ENCODE measurements at regions of chr20 and their contacts with region 1.

Region 1: DNA sequence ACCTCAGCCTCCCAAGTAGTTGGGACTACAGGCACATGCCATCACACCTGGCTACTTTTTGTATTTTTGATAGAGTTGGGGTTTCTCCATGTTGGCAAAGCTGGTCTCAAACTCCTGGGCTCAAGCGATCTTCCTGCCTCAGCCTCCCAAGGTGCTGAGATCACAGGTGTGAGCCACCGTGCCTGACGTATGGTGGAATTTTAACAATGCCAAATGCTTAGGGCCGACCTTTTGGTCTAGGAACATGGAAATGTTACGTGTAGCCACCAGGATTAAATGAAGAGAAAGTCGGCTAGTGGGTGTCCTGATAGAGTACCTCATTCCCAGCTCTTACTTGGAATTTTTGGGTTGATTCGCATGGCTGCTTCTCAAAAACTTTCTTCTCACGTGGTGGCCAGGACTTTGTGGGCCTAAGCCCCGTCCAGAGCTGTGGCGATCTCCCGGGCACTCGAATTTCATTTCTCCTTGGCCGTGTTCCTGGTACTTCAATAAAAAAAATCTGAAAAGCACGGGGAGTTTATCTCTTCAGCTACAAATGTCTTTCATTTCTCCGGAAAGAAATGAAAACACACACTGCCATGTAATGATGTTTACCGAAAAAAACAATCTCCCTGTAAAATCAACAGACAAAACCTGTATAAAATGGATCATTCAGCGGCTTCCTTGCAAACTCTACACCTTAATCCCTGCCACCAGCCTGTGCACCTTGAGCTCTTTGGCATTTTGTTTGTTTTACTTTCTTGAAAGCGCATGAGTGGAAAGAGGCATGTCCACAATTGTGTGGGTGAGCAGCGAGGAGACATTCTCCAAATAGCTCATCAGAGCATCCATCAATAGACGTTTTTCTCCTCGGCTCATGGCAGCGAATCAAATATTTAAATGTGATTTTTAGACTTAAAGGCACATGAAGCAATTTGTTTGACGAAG is 172.9 kb downstream of the TFAP2C start:
- DNase-seq: no peak
- H3K4me3 ChIP-seq: no peak overlapping the region
- H3K27ac ChIP-seq: no peak overlapping the region
- H3K4me1 ChIP-seq: peaks cover 27% of the 10 kb centered on the region
- H3K27me3 ChIP-seq: no peaks in the 10 kb centered on the region
- CTCF ChIP-seq: no peak

Region 2: DNA sequence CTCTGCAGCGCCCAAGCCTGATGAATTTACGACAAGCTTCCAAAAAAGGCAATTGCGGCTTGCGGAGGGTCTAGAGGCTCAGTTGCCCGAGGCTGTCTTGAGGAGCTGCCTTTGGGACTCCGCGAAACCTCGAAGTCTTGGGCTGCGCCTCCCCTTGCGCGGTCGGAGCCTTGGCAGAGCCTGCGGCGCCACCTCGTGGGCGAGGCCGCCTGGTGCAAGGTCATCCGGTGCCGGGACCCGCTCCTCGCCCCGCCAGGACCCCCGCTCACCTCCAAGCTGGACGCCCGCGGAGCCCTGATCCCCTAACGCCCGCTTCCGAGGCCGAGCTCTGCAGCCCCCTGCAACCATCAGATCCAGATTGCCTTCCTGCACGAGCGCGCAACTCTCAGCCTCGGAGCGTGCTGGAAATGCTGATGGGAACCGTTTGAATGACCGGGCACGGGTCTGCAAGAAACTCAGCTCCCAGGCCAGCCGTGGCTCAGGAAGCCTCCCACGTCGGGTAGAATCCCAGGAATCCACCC is 458.1 kb before region 1 on chr20:
- CTCF ChIA-PET with region 1: no interaction called
- POLR2A ChIA-PET with region 1: no interaction called
- intact Hi-C with region 1: no loop called
- DNase-seq: peak in 1 of 2 experiments; percentile 17
- H3K4me3 ChIP-seq: no peak overlapping the region
- H3K27ac ChIP-seq: no peak overlapping the region
- H3K4me1 ChIP-seq: no peaks in the 10 kb centered on the region
- H3K27me3 ChIP-seq: peaks cover 81% of the 10 kb centered on the region
- CTCF ChIP-seq: peak; percentile 48

Region 3: GRCh38 chr20:56689288-56689687 is 112.7 kb before region 1 on chr20:
- CTCF ChIA-PET with region 1: no interaction called
- POLR2A ChIA-PET with region 1: no interaction called
- intact Hi-C with region 1: loop called (anchors 1 kb)
- DNase-seq: peak; percentile 84 to 98
- H3K4me3 ChIP-seq: peak overlapping the region; percentile 50
- H3K27ac ChIP-seq: peak overlapping the region; percentile 99
- H3K4me1 ChIP-seq: peaks cover 55% of the 10 kb centered on the region
- H3K27me3 ChIP-seq: no peaks in the 10 kb centered on the region
- CTCF ChIP-seq: no peak

Region 4: GRCh38 chr20:56788040-56788983 is 13.7 kb before region 1 on chr20:
- CTCF ChIA-PET with region 1: no interaction called
- POLR2A ChIA-PET with region 1: no interaction called
- intact Hi-C with region 1: loop called (anchors 1 kb)
- DNase-seq: peak; percentile 82 to 99
- H3K4me3 ChIP-seq: peak overlapping the region; percentile 12; the same call in 1 of the 2 replicates
- H3K27ac ChIP-seq: peak overlapping the region; percentile 96
- H3K4me1 ChIP-seq: peaks cover 46% of the 10 kb centered on the region
- H3K27me3 ChIP-seq: no peaks in the 10 kb centered on the region
- CTCF ChIP-seq: no peak

Region 5: GRCh38 chr20:56826705-56827631 is 25.0 kb after region 1 on chr20:
- CTCF ChIA-PET with region 1: no interaction called
- POLR2A ChIA-PET with region 1: interaction called, 13 read pairs
- intact Hi-C with region 1: no loop called
- DNase-seq: peak in 1 of 2 experiments; percentile 79
- H3K4me3 ChIP-seq: peak overlapping the region; percentile 32; the same call in 1 of the 2 replicates
- H3K27ac ChIP-seq: no peak overlapping the region
- H3K4me1 ChIP-seq: peaks cover 15% of the 10 kb centered on the region
- H3K27me3 ChIP-seq: no peaks in the 10 kb centered on the region
- CTCF ChIP-seq: no peak

Region 6: DNA sequence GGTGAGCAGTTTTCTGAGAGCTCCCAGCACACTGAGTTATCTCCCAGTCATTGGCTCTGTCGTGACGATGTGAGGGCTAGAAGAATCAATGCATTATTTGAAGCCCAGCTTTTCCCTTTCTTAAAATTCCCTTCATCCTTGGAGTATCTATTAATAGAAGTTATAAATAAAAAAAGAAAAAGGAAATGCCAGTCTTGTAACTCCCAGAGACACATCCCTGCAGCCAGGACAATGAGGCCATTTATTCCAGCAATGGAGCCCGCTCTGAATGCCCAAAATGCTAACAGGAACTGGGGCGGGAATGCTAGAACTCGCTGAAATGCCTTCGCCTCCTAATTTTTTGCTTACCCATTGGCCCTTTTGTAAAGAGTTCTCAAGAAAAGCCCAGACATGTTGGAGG is 132.9 kb after region 1 on chr20:
- CTCF ChIA-PET with region 1: no interaction called
- POLR2A ChIA-PET with region 1: no interaction called
- intact Hi-C with region 1: no loop called
- DNase-seq: no peak
- H3K4me3 ChIP-seq: no peak overlapping the region
- H3K27ac ChIP-seq: no peak overlapping the region
- H3K4me1 ChIP-seq: no peaks in the 10 kb centered on the region
- H3K27me3 ChIP-seq: no peaks in the 10 kb centered on the region
- CTCF ChIP-seq: no peak

Region 7: GRCh38 chr20:56974499-56975236 is 172.7 kb after region 1 on chr20:
- CTCF ChIA-PET with region 1: no interaction called
- POLR2A ChIA-PET with region 1: no interaction called
- intact Hi-C with region 1: loop called (anchors 2 kb)
- DNase-seq: peak; percentile 69 to 89
- H3K4me3 ChIP-seq: peak overlapping the region; percentile 48; the same call in 1 of the 2 replicates
- H3K27ac ChIP-seq: peak overlapping the region; percentile 57
- H3K4me1 ChIP-seq: peaks cover 26% of the 10 kb centered on the region
- H3K27me3 ChIP-seq: no peaks in the 10 kb centered on the region
- CTCF ChIP-seq: peak; percentile 96

Region 8: DNA sequence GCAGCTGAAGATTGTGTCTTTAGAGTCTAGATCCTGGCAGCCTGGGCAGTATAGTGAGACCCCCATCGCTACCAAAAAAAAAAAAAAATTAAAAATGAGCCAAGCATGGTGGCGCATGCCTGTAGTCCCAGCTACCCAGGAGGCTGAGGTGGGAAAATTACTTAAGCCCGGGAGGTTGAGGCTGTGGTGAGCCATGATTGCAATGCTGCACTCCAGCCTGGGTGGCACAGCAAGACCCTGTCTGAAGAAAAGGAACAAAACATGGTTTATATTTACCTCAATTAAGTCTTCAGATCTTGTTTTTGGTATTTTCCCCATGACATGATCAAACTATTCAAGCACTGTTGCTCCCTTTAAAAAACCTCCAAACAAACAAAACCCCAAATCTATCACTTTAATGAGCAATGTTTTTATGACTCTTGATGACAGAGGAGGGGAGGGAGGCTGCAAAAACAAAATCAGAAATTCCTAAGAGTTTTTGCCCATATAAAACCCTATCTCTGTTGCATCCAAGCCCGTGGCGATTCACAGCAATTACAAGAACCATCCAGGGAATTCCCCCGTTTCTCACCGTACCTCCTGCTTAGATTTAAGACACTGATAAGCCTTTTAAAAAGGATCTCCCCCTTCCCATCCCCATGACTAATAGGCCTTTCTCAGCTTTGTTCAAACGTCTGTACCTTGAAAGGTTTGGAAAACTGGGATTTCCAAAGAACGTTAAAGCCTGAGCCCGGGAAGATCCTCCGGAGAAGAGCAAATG is 204.6 kb after region 1 on chr20:
- CTCF ChIA-PET with region 1: no interaction called
- POLR2A ChIA-PET with region 1: no interaction called
- intact Hi-C with region 1: no loop called
- DNase-seq: peak in 1 of 2 experiments; percentile 66
- H3K4me3 ChIP-seq: 0 out of 2 replicates have a peak overlapping the region, but pooled peaks have one; percentile 3
- H3K27ac ChIP-seq: no peak overlapping the region
- H3K4me1 ChIP-seq: peaks cover 24% of the 10 kb centered on the region
- H3K27me3 ChIP-seq: no peaks in the 10 kb centered on the region
- CTCF ChIP-seq: no peak

Region 9: DNA sequence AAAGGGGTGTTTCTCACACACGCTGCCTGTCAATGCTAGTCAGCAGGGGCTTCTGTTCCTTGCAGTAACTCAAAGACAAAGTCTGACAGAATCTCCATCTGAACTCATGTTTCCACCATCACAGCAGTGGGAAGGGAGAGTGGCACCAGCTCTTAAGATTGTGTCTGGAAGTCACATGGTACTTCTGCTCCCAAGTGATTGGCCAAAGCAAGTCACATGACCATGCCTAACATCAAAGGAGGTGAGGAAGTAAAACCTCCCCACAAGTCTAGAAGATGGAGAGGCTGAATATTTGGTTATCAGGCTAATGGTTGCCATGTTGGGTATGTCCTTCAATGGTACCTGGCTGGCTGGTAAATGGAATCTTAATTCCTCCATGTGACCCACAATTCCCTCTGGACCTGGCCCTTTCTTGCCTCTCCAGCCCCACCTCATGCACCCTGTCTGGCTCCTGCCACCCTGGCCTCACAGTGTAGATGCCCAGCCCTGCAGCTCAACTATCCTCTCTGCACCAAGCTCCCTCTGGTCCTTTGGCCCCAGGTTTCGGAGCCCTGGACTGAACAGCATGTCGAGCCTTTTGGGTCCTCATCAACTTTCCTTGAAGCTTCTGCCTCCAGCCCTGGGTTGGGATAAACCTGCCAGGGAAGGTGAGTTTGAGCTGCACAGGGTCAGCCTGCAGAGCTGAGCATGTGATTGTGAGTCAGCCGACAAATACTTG is 958.9 kb after region 1 on chr20:
- CTCF ChIA-PET with region 1: no interaction called
- POLR2A ChIA-PET with region 1: no interaction called
- intact Hi-C with region 1: no loop called
- DNase-seq: peak in 1 of 2 experiments; percentile 20
- H3K4me3 ChIP-seq: no peak overlapping the region
- H3K27ac ChIP-seq: no peak overlapping the region
- H3K4me1 ChIP-seq: peaks cover 9% of the 10 kb centered on the region
- H3K27me3 ChIP-seq: no peaks in the 10 kb centered on the region
- CTCF ChIP-seq: no peak

Measured in PC-9 (cell line).